CD4-positive, alpha-beta memory T cell (primary cell): ENCODE measurements at regions of chr18 and their contacts with region 1.

Region 1: DNA sequence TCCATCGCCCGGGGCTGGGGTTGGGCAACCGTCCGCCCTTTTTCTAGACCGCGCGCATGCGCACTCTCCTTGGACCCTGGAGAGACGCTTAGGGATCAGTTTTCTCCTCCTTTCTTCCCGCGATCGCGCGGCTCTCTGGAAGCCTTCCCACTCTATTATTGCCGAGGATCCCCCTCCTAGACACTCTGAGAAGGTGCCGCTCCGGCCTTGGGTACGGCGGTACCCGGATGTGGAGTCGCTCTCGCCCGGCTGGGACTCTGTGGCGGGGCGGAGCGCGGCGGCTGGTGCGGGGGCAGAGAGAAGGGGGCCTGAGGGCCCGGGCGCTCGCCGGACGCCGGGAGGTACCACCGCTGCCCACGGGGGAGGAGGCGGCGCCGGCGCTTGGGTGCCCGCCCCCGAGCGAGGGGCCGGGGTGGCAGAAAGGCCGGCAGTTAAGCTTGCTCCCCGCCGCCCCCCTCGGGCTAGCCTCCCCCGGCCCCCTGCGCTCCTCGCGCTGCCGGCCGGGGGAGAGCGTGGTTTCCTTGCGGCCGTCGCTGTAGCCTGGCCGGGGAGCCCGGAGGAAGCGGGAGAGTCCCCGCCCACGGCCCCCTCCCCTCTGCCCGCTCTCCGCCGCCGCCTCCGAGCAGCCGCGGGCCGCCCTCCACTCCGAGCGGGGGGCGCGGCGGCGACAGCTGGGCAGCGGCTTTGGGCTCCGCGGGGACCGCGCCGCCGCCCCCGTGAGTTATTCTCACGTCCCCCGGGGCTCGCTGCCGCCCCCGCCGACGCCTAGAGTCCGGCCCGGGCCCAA is at the start of gene MIB1:
- DNase-seq: peak in 2 of 5 donors; percentile 98 to 99
- H3K4me3 ChIP-seq: peak within 1 kb of the TSS in 1 of 2 donors; percentile 100
- H3K4me3 Mint-ChIP-seq: peak within 1 kb of the TSS; percentile 94 to 98 (median 95)
- H3K27ac ChIP-seq: peak within 1 kb of the TSS; percentile 94
- H3K27ac Mint-ChIP-seq: peak within 1 kb of the TSS; percentile 91 to 98 (median 97)
- H3K4me1 ChIP-seq: peaks cover 48% of the 10 kb centered on the region
- H3K4me1 Mint-ChIP-seq: peaks cover 29 to 70% (median 47%) of the 10 kb centered on the region in 4 donors
- H3K27me3 ChIP-seq: no peaks in the 10 kb centered on the region
- H3K27me3 Mint-ChIP-seq: no peaks in the 10 kb centered on the region
- total RNA-seq, gene MIB1: 37.6 to 39.0 TPM

Region 2: GRCh38 chr18:21682371-21683051 is 58.4 kb before region 1 on chr18:
- CTCF ChIA-PET with region 1: interaction called, 3 read pairs
- POLR2A ChIA-PET with region 1: interaction called, 11 read pairs
- intact Hi-C with region 1: loop called (anchors 2 kb)
- DNase-seq: peak in 4 of 5 donors; percentile 43 to 54 (median 48)
- H3K4me3 ChIP-seq: peak overlapping the region; percentile 61 to 66
- H3K4me3 Mint-ChIP-seq: no peak overlapping the region
- H3K27ac ChIP-seq: peak overlapping the region; percentile 63
- H3K27ac Mint-ChIP-seq: no peak overlapping the region
- H3K4me1 ChIP-seq: peaks cover 37% of the 10 kb centered on the region
- H3K4me1 Mint-ChIP-seq: peaks cover 9 to 19% (median 15%) of the 10 kb centered on the region in 4 donors
- H3K27me3 ChIP-seq: no peaks in the 10 kb centered on the region
- H3K27me3 Mint-ChIP-seq: no peaks in the 10 kb centered on the region

Region 3: DNA sequence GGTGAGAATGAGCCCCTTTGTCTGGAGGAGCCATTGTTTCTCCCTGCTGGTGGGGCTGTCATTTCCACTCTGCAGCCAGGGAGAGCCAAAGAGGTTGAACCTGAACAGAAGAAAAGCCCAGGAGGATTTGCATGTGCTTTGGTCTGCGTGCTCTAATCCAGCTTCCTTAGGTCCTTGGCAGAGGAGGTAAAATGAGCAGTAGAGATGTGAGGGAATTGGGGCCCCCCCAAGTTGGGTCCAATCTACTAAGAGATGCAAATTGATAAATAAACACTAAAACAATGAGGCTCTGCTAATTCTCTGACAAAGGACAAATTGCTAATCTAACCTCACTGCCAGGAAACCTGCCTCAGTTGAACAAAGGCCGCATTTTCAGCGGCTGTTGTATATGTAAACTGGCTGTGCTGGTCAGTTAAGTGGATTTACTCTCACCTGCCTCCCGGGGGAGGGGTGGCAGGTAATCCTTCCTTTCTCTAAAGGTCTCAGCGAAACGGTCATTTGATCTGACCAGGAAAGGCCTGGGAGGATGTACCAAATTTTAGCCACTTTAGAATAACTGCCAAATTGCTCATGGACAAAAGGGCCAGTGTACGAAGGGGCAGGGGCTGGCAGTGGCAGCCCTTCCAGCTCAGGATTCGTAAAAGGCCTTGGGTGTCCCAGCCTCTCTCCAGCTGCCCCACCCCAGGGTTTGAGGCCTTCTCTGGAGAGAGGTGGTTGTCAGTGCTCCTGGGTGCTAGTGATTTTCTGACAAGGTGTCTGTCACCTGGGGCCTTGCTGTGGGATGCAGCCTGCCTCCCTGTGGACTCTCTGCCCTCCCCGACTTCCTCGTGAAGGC is 193.2 kb after region 1 on chr18:
- CTCF ChIA-PET with region 1: no interaction called
- POLR2A ChIA-PET with region 1: no interaction called
- intact Hi-C with region 1: no loop called
- DNase-seq: no peak
- H3K4me3 ChIP-seq: no peak overlapping the region
- H3K4me3 Mint-ChIP-seq: no peak overlapping the region
- H3K27ac ChIP-seq: no peak overlapping the region
- H3K27ac Mint-ChIP-seq: no peak overlapping the region
- H3K4me1 ChIP-seq: no peaks in the 10 kb centered on the region
- H3K4me1 Mint-ChIP-seq: no peaks in the 10 kb centered on the region
- H3K27me3 ChIP-seq: no peaks in the 10 kb centered on the region
- H3K27me3 Mint-ChIP-seq: peaks cover 3 to 16% of the 10 kb centered on the region in 2 donors